ENCODE measurements at regions of chr13 and their contacts with region 1.

Region 1: GRCh38 chr13:108895220-108895704 is 265.9 kb downstream of the MYO16 start:
- DNase-seq: no peak
- ATAC-seq: no peak
- H3K4me3 ChIP-seq: no peak overlapping the region
- H3K27ac ChIP-seq: no peak overlapping the region
- H3K4me1 ChIP-seq: no peaks in the 10 kb centered on the region
- H3K27me3 ChIP-seq: no peaks in the 10 kb centered on the region

Region 2: GRCh38 chr13:108322206-108322824 is 572.9 kb before region 1 on chr13:
- intact Hi-C with region 1: loop called (anchors 10 kb)
- DNase-seq: no peak
- ATAC-seq: no peak
- H3K4me3 ChIP-seq: no peak overlapping the region
- H3K27ac ChIP-seq: no peak overlapping the region
- H3K4me1 ChIP-seq: no peaks in the 10 kb centered on the region
- H3K27me3 ChIP-seq: no peaks in the 10 kb centered on the region

Measured in aorta (tissue), 5 donors.